K562 (cell line): ENCODE measurements at regions of chr12 and their contacts with region 1.

Region 1: DNA sequence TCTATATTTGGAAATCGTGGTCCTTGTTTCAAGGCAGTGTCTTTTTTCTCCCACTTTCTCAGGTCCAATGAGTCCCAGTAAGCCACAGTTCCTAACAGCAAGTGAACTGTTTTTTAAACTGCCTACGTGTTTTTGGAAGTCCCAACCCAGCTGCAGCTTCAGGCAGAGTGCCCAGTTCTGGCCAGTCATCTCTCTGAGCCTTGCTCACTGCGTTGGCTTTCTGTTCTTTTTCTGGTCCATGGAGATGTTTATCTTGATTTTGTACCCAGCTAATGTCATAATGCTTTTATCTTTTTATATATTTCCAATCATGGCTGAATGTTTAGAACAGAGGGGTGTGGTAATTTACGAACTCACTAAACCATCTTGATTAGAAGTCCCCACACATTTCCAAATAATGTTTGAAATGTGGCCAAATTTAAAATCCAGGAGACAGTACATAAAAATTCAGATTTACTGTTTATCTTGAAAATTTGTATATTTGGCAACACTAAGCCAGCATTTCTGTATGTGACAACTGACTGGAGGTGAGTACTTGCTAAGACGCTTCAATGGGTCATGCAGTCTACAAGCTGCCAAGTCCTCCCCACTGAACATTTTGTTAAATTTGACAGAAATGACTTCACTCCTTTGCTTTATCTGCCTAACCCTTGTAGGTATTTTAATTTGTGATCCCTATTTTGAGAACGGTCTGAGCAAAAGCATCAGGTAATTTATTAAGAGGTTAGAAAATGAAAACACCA is 46.1 kb upstream of the OTOGL start:
- DNase-seq: no peak
- ATAC-seq: no peak
- H3K4me3 ChIP-seq: no peak overlapping the region
- H3K27ac ChIP-seq: no peak overlapping the region
- H3K4me1 ChIP-seq: no peaks in the 10 kb centered on the region
- H3K27me3 ChIP-seq: no peaks in the 10 kb centered on the region
- CTCF ChIP-seq: no peak
- EP300 ChIP-seq: no peak
- POLR2A ChIP-seq: no peak
- RAD21 ChIP-seq: no peak

Region 2: DNA sequence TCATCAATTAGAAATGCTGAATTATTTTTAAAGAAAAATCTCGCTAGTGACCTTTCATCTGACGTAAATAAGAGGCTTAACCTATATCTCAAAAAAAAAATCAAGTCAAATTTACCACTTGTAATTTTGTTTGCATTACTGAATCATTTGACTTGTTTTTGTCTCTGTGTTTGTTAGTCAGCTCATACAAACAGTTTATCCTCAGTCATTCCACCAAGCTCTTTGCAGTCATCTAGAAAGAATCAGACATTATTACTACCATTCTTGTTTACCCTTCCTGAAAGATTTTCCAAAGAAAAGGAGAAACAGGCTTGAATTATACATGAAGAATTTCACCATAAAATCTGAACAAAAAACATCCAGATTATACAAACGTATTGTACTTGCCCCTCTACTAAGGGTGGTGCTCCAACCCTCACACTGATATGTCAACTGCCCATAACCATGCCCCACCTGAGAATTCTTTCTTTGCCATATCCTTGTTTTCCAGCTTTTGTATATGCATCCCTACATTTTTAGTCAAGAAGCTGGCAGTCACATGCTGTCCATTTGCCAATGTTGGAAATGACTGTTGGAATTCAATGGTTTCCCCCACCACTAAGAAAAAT is 619.6 kb before region 1 on chr12:
- CTCF ChIA-PET with region 1: no interaction called
- POLR2A ChIA-PET with region 1: no interaction called
- in situ Hi-C with region 1: loop called (anchors 5 kb)
- intact Hi-C with region 1: no loop called
- DNase-seq: no peak
- ATAC-seq: no peak
- H3K4me3 ChIP-seq: no peak overlapping the region
- H3K27ac ChIP-seq: no peak overlapping the region
- H3K4me1 ChIP-seq: no peaks in the 10 kb centered on the region
- H3K27me3 ChIP-seq: no peaks in the 10 kb centered on the region
- CTCF ChIP-seq: no peak
- EP300 ChIP-seq: no peak
- POLR2A ChIP-seq: no peak
- RAD21 ChIP-seq: no peak

Region 3: DNA sequence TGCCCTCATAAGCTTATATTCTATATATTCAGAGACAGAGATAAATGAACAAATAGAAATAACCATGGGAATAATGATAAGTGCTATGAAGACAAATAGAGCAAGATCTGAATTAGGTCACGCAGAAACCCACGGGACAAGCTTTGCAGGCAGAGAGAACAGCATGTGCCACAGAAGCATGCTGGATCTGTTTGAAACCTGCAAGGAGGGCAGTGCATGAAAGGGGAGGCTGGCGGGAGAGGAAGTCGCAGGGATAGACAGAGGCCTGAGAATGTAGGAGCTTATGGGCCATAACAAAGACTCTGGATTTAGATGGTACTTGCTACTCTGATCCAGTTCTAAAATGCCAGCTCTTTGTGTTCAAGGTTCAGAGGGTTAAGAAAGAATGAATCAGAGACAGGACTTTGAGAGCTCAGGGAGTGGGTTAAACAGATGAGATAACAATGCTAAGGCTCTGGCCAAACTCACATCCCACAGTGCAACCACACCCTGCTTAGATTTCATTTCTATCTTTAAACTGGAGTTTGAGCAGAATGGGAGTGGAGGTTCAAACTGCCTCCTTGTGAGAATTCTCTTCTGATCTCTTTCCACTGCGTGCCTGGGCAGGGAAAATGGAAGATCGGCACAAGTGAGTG is 69.1 kb before region 1 on chr12:
- CTCF ChIA-PET with region 1: no interaction called
- POLR2A ChIA-PET with region 1: no interaction called
- in situ Hi-C with region 1: no loop called
- intact Hi-C with region 1: no loop called
- DNase-seq: no peak
- ATAC-seq: peak; percentile 43; the same call in 1 of the 3 replicates
- H3K4me3 ChIP-seq: no peak overlapping the region
- H3K27ac ChIP-seq: no peak overlapping the region
- H3K4me1 ChIP-seq: no peaks in the 10 kb centered on the region
- H3K27me3 ChIP-seq: no peaks in the 10 kb centered on the region; a peak in 2 of 5 replicates
- CTCF ChIP-seq: no peak
- EP300 ChIP-seq: no peak
- POLR2A ChIP-seq: no peak
- RAD21 ChIP-seq: no peak